ENCODE measurements at regions of chr4 and their contacts with region 1.

Region 1: GRCh38 chr4:139530833-139531427 is 25.1 kb downstream of the SETD7 start:
- DNase-seq: peak; percentile 29 to 63 (median 50)
- ATAC-seq: peak; percentile 79
- H3K4me3 ChIP-seq: no peak overlapping the region
- H3K4me3 Mint-ChIP-seq: no peak overlapping the region
- H3K27ac ChIP-seq: no peak overlapping the region
- H3K27ac Mint-ChIP-seq: no peak overlapping the region
- H3K4me1 ChIP-seq: peaks cover 0 to 14% of the 10 kb centered on the region in 2 donors
- H3K4me1 Mint-ChIP-seq: peaks cover 0 to 10% (median 0%) of the 10 kb centered on the region in 7 donors
- H3K27me3 ChIP-seq: no peaks in the 10 kb centered on the region
- H3K27me3 Mint-ChIP-seq: no peaks in the 10 kb centered on the region

Region 2: GRCh38 chr4:139108567-139109128 is 422.3 kb before region 1 on chr4:
- CTCF ChIA-PET with region 1: no interaction called
- POLR2A ChIA-PET with region 1: no interaction called
- intact Hi-C with region 1: loop called in 1 of 2 experiments (anchors 10 kb)
- DNase-seq: no peak
- ATAC-seq: no peak
- H3K4me3 ChIP-seq: no peak overlapping the region
- H3K4me3 Mint-ChIP-seq: no peak overlapping the region
- H3K27ac ChIP-seq: no peak overlapping the region
- H3K27ac Mint-ChIP-seq: no peak overlapping the region
- H3K4me1 ChIP-seq: no peaks in the 10 kb centered on the region
- H3K4me1 Mint-ChIP-seq: no peaks in the 10 kb centered on the region
- H3K27me3 ChIP-seq: no peaks in the 10 kb centered on the region
- H3K27me3 Mint-ChIP-seq: no peaks in the 10 kb centered on the region

Region 3: GRCh38 chr4:139229534-139230039 is 301.3 kb before region 1 on chr4:
- CTCF ChIA-PET with region 1: no interaction called
- POLR2A ChIA-PET with region 1: no interaction called
- intact Hi-C with region 1: loop called in 1 of 2 experiments (anchors 2 kb)
- DNase-seq: peak in 7 of 9 donors; percentile 11 to 58 (median 37)
- ATAC-seq: peak; percentile 84
- H3K4me3 ChIP-seq: no peak overlapping the region
- H3K4me3 Mint-ChIP-seq: no peak overlapping the region
- H3K27ac ChIP-seq: no peak overlapping the region
- H3K27ac Mint-ChIP-seq: no peak overlapping the region
- H3K4me1 ChIP-seq: no peaks in the 10 kb centered on the region
- H3K4me1 Mint-ChIP-seq: peaks cover 0 to 7% (median 4%) of the 10 kb centered on the region in 7 donors
- H3K27me3 ChIP-seq: no peaks in the 10 kb centered on the region
- H3K27me3 Mint-ChIP-seq: no peaks in the 10 kb centered on the region

Region 4: DNA sequence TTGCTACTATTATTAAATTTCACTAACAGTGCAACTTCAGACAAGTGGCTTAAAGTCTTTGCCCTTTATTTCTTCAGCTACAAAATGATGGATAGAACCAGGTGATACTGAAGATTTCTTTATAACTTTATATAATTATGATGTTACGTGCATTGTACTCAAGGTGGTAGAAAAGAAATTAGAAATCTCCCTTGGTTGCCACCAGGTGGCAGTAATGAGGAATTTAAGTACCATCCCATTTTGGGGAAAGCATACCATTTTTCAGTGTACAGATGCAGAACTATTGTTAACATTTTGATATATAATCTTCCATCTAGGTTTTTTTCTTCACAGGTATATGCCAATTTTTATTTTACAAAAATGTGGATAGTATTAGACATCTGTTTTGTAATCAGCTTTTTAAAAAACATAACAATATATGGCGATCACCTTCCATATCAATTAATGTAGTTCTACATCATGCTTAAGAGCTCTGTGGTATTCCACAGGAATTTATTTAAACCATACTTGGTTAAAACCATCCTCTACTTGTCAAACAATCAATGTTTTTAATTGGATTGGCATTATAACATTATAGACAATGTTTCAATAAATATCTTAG is 114.8 kb before region 1 on chr4:
- CTCF ChIA-PET with region 1: interaction called, 7 read pairs
- POLR2A ChIA-PET with region 1: no interaction called
- intact Hi-C with region 1: loop called (anchors 1 kb)
- DNase-seq: peak in 6 of 9 donors; percentile 5 to 46 (median 43)
- ATAC-seq: peak; percentile 72
- H3K4me3 ChIP-seq: no peak overlapping the region
- H3K4me3 Mint-ChIP-seq: no peak overlapping the region
- H3K27ac ChIP-seq: no peak overlapping the region
- H3K27ac Mint-ChIP-seq: no peak overlapping the region
- H3K4me1 ChIP-seq: no peaks in the 10 kb centered on the region
- H3K4me1 Mint-ChIP-seq: peaks cover 0 to 19% (median 12%) of the 10 kb centered on the region in 7 donors
- H3K27me3 ChIP-seq: no peaks in the 10 kb centered on the region
- H3K27me3 Mint-ChIP-seq: no peaks in the 10 kb centered on the region

Region 5: GRCh38 chr4:139501927-139502899 is 28.7 kb before region 1 on chr4:
- CTCF ChIA-PET with region 1: interaction called, 5 read pairs
- POLR2A ChIA-PET with region 1: no interaction called
- intact Hi-C with region 1: loop called in 1 of 2 experiments (anchors 2 kb)
- DNase-seq: no peak
- ATAC-seq: no peak
- H3K4me3 ChIP-seq: no peak overlapping the region
- H3K4me3 Mint-ChIP-seq: no peak overlapping the region
- H3K27ac ChIP-seq: no peak overlapping the region
- H3K27ac Mint-ChIP-seq: no peak overlapping the region
- H3K4me1 ChIP-seq: no peaks in the 10 kb centered on the region
- H3K4me1 Mint-ChIP-seq: peaks cover 0 to 7% (median 0%) of the 10 kb centered on the region in 7 donors
- H3K27me3 ChIP-seq: no peaks in the 10 kb centered on the region
- H3K27me3 Mint-ChIP-seq: peaks cover 0 to 7% (median 5%) of the 10 kb centered on the region in 5 donors

Measured in naive thymus-derived CD4-positive, alpha-beta T cell (primary cell).